ENCODE measurements at regions of chr4 and their contacts with region 1.

Region 1: GRCh38 chr4:85149676-85150075 is 183.2 kb upstream of the WDFY3 start:
- DNase-seq: no peak
- H3K4me3 ChIP-seq: no peak overlapping the region
- CTCF ChIP-seq: no peak
- POLR2A ChIP-seq: no peak

Region 2: DNA sequence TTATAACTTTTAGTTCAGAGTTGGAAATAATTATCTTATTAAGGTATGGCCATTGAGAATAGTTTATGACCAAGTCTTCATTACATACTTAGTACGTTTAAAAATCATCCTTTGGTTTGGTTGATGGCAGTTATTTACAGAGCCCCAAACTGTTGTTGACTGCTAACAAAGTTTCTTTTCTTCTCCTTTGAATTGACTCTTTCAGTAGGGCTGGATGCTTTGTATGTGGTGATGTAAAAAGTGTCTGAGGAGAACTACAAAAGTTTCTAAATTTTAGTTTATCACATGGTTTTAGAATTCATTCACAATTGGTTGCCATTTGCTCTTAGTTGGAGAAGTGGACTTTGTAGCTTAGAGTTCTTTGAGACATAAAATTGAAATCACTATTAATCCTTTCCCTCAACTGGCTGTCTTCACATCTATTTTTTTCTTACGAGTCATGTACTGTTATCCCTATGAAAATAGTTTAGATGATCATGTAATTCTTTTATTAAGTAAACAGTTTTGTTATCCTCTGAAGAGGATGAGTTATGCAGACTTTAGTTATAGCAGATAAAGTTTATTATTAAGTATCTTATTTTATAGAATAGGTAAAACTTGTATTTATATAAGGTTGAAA is 1459.2 kb after region 1 on chr4:
- intact Hi-C with region 1: loop called (anchors 5 kb)
- DNase-seq: no peak
- H3K4me3 ChIP-seq: no peak overlapping the region
- CTCF ChIP-seq: no peak
- POLR2A ChIP-seq: no peak